Activated CD4-positive, alpha-beta T cell treated with anti-CD3 and anti-CD28 coated beads for 36 hours (primary cell): ENCODE measurements at regions of chr3 and their contacts with region 1.

Region 1: DNA sequence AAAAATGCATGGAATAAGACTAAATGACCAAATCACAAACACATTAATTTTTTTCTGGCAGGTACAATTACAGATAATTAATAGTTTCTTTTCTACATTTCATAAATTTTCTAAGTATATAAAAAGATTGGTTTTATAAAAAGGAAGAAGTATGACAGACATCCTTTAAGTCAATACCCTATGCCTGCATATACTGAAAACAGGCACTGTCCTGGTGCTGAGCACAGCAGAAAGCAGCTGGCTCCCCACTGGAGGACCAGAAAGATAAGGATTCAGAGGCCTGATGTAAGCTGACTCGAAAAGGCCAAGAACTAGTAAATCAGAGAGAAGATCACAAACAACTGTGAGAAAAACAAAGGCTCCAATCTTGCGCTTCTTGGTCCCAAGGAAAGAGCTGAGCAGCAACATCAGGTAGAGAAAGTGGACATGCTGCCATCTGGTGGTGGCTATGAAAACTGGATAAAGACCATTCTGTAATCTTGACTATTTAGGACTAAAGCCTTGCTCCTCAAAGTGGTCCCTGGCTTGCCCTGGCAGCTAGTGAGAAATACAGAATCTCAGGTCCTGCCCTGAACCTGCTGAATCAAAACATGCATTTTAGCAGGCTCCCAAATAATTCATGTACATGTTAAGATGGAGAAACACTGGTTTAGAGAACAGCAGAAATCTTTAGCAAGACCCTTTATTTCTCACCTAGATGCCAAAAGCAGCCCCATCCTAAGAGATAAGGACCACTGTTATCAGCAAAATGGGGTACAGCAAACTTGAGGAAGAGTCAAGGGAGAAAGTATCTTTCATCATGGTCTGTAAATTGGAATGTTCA is 76.0 kb downstream of the TRANK1 start:
- DNase-seq: peak; percentile 68
- ATAC-seq: peak; percentile 87
- H3K4me3 Mint-ChIP-seq: no peak overlapping the region
- H3K27ac Mint-ChIP-seq: no peak overlapping the region
- H3K4me1 Mint-ChIP-seq: peaks cover 17% of the 10 kb centered on the region
- H3K27me3 Mint-ChIP-seq: no peaks in the 10 kb centered on the region

Region 2: DNA sequence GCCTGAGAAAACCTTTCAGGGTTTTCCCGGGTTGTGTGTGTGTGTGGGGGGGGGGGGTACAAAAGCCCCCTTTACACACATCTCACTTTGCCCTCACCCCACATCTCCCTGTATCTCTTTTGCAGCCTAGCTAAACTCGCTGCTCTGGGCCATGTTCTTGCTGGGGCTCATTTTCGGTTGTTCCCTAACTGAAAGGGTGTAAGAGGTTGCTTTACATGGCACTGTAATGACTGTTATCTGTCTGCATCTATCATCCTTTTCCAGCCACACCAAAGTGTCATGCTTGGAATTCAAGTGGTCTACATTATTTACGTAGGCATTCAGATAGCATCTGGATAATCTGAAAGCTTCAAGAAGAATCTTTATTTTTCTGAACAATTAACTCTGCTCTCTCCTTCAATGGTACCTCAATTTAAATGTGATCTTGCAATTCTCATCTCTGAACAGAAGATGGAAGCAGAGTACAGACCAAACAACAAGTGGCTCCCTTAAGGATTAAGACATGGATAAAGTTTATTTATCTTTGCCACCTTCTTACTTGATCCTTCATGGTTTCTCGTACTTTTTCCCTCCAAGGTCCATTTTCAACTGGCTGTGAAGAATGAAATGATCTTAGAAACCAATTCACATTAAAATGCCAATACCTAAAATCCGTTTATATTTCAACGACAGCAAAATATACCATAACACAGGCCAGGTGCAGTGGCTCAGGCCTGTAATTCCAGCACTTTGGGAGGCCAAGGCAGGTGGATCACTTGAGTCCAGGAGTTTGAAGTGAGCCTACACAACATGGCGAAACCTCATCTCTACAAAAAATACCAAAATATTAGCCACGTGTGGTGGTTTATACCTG is 139.4 kb before region 1 on chr3:
- CTCF ChIA-PET with region 1: interaction called, 10 read pairs
- POLR2A ChIA-PET with region 1: no interaction called
- intact Hi-C with region 1: loop called (anchors 1 kb)
- DNase-seq: no peak
- ATAC-seq: no peak
- H3K4me3 Mint-ChIP-seq: no peak overlapping the region
- H3K27ac Mint-ChIP-seq: no peak overlapping the region
- H3K4me1 Mint-ChIP-seq: no peaks in the 10 kb centered on the region
- H3K27me3 Mint-ChIP-seq: no peaks in the 10 kb centered on the region

Region 3: GRCh38 chr3:36792342-36792741 is 76.5 kb before region 1 on chr3:
- CTCF ChIA-PET with region 1: interaction called, 3 read pairs
- POLR2A ChIA-PET with region 1: no interaction called
- intact Hi-C with region 1: loop called (anchors 2 kb)
- DNase-seq: peak; percentile 36
- ATAC-seq: peak; percentile 33
- H3K4me3 Mint-ChIP-seq: no peak overlapping the region
- H3K27ac Mint-ChIP-seq: no peak overlapping the region
- H3K4me1 Mint-ChIP-seq: no peaks in the 10 kb centered on the region
- H3K27me3 Mint-ChIP-seq: peaks cover 4% of the 10 kb centered on the region

Region 4: DNA sequence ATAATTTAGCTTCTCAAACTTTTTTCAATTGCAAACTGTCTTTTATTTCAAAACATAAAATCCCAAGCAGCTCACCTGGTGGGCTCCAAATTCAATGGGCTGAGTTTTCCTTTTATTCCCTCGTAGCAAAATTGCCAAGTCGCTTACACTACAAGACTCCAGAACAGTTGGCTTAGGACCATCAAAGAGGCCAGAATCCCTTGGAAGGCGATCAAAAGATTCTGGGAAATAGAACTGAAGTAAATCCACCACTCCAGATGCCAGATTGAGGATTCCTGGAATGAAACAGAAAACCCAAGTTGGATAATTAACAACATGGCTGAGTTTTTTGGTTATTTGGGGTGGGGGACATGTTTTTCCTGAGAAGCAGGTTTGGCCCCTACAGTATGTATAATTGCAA is 16.8 kb before region 1 on chr3:
- CTCF ChIA-PET with region 1: interaction called, 21 read pairs
- POLR2A ChIA-PET with region 1: no interaction called
- intact Hi-C with region 1: no loop called
- DNase-seq: no peak
- ATAC-seq: no peak
- H3K4me3 Mint-ChIP-seq: no peak overlapping the region
- H3K27ac Mint-ChIP-seq: no peak overlapping the region
- H3K4me1 Mint-ChIP-seq: no peaks in the 10 kb centered on the region
- H3K27me3 Mint-ChIP-seq: no peaks in the 10 kb centered on the region

Region 5: DNA sequence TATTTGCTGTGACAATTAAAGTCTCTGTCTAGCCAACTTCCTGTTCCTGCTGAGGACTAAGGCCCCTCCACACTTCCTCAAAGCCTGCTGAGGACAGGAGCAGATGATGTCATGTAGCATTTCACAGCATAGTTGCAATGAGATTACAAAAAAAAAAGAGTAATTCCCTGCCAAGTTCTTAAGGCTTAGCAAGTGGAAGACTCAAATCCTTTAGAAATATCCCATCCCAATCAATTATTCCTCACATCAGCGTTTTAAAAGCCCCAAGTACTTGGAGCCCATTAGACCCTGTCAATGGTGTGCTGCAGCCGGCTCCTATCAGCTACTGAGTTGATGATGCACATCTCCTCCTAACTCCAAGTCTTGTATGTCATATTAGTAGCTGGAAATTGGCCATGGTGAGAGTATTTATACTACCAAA is 24.3 kb after region 1 on chr3:
- CTCF ChIA-PET with region 1: interaction called, 16 read pairs
- POLR2A ChIA-PET with region 1: interaction called, 3 read pairs
- intact Hi-C with region 1: no loop called
- DNase-seq: peak; percentile 39
- ATAC-seq: peak; percentile 76
- H3K4me3 Mint-ChIP-seq: no peak overlapping the region
- H3K27ac Mint-ChIP-seq: peak overlapping the region; percentile 63
- H3K4me1 Mint-ChIP-seq: peaks cover 41% of the 10 kb centered on the region
- H3K27me3 Mint-ChIP-seq: no peaks in the 10 kb centered on the region

Region 6: GRCh38 chr3:36904641-36905040 is 35.8 kb after region 1 on chr3:
- CTCF ChIA-PET with region 1: interaction called, 16 read pairs
- POLR2A ChIA-PET with region 1: no interaction called
- intact Hi-C with region 1: no loop called
- DNase-seq: no peak
- ATAC-seq: no peak
- H3K4me3 Mint-ChIP-seq: no peak overlapping the region
- H3K27ac Mint-ChIP-seq: no peak overlapping the region
- H3K4me1 Mint-ChIP-seq: peaks cover 78% of the 10 kb centered on the region
- H3K27me3 Mint-ChIP-seq: no peaks in the 10 kb centered on the region